ENCODE measurements at regions of chr15 and their contacts with region 1.

Region 1: GRCh38 chr15:52481915-52482314 is 46.8 kb downstream of the MYO5A start:
- DNase-seq: peak; percentile 17
- H3K4me3 ChIP-seq: no peak overlapping the region
- H3K27ac ChIP-seq: peak overlapping the region; percentile 3 to 64 (median 59)
- H3K4me1 ChIP-seq: peaks cover 8 to 30% (median 16%) of the 10 kb centered on the region in 3 donors
- H3K27me3 ChIP-seq: no peaks in the 10 kb centered on the region
- CTCF ChIP-seq: no peak
- POLR2A ChIP-seq: peak in 1 of 4 donors; percentile 15

Region 2: GRCh38 chr15:52427804-52428203 is 54.1 kb before region 1 on chr15:
- intact Hi-C with region 1: loop called (anchors 10 kb)
- DNase-seq: no peak
- H3K4me3 ChIP-seq: no peak overlapping the region
- H3K27ac ChIP-seq: no peak overlapping the region
- H3K4me1 ChIP-seq: peaks cover 0 to 4% (median 0%) of the 10 kb centered on the region in 3 donors
- H3K27me3 ChIP-seq: no peaks in the 10 kb centered on the region
- CTCF ChIP-seq: no peak
- POLR2A ChIP-seq: no peak